ENCODE measurements at regions of chr1 and their contacts with region 1.

Region 1: GRCh38 chr1:241109039-241109438 is 248.0 kb downstream of the RGS7 start:
- DNase-seq: no peak
- H3K4me3 ChIP-seq: no peak overlapping the region
- CTCF ChIP-seq: no peak

Region 2: GRCh38 chr1:240758296-240758695 is 350.7 kb before region 1 on chr1:
- in situ Hi-C with region 1: no loop called
- DNase-seq: no peak
- H3K4me3 ChIP-seq: no peak overlapping the region
- CTCF ChIP-seq: no peak

Region 3: GRCh38 chr1:241029580-241030208 is 79.3 kb before region 1 on chr1:
- in situ Hi-C with region 1: loop called (anchors 5 kb)
- DNase-seq: no peak
- H3K4me3 ChIP-seq: no peak overlapping the region
- CTCF ChIP-seq: no peak

Measured in astrocyte of the cerebellum (primary cell).